ENCODE measurements at regions of chr7 and their contacts with region 1.

Region 1: DNA sequence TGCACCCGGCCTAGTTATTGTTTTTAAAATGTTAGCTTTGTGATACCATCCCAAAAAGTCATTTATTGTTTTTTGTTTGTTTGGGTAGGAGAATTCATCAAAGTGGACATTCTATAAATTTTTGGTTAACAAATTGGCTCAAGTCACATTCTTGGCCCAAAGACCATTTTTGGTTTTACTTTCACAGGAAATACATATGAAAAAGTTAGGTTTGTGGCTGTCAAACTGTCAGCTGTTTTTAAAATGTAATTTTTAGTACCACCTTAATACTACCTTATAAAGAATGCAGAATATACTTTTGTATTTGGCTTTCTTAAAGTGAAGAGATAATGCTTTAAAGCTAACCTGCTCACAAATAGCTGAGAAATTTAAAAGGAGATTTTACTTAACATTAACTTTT is 25.1 kb downstream of the TMEM168 start:
- DNase-seq: no peak
- ATAC-seq: no peak
- H3K4me3 ChIP-seq: no peak overlapping the region
- H3K4me3 Mint-ChIP-seq: no peak overlapping the region
- H3K27ac ChIP-seq: no peak overlapping the region
- H3K27ac Mint-ChIP-seq: no peak overlapping the region
- H3K4me1 ChIP-seq: peaks cover 0 to 3% of the 10 kb centered on the region in 2 donors
- H3K4me1 Mint-ChIP-seq: peaks cover 0 to 26% (median 18%) of the 10 kb centered on the region in 7 donors
- H3K27me3 ChIP-seq: no peaks in the 10 kb centered on the region
- H3K27me3 Mint-ChIP-seq: no peaks in the 10 kb centered on the region

Region 2: GRCh38 chr7:112821345-112821744 is 56.2 kb after region 1 on chr7:
- CTCF ChIA-PET with region 1: no interaction called
- POLR2A ChIA-PET with region 1: no interaction called
- intact Hi-C with region 1: loop called in 1 of 2 experiments (anchors 10 kb)
- DNase-seq: no peak
- ATAC-seq: no peak
- H3K4me3 ChIP-seq: no peak overlapping the region
- H3K4me3 Mint-ChIP-seq: no peak overlapping the region
- H3K27ac ChIP-seq: no peak overlapping the region
- H3K27ac Mint-ChIP-seq: no peak overlapping the region
- H3K4me1 ChIP-seq: no peaks in the 10 kb centered on the region
- H3K4me1 Mint-ChIP-seq: no peaks in the 10 kb centered on the region
- H3K27me3 ChIP-seq: no peaks in the 10 kb centered on the region
- H3K27me3 Mint-ChIP-seq: no peaks in the 10 kb centered on the region

Measured in naive thymus-derived CD4-positive, alpha-beta T cell (primary cell).